Right ventricle myocardium inferior (tissue), 1 donor: ENCODE measurements at regions of chr1 and their contacts with region 1.

Region 1: DNA sequence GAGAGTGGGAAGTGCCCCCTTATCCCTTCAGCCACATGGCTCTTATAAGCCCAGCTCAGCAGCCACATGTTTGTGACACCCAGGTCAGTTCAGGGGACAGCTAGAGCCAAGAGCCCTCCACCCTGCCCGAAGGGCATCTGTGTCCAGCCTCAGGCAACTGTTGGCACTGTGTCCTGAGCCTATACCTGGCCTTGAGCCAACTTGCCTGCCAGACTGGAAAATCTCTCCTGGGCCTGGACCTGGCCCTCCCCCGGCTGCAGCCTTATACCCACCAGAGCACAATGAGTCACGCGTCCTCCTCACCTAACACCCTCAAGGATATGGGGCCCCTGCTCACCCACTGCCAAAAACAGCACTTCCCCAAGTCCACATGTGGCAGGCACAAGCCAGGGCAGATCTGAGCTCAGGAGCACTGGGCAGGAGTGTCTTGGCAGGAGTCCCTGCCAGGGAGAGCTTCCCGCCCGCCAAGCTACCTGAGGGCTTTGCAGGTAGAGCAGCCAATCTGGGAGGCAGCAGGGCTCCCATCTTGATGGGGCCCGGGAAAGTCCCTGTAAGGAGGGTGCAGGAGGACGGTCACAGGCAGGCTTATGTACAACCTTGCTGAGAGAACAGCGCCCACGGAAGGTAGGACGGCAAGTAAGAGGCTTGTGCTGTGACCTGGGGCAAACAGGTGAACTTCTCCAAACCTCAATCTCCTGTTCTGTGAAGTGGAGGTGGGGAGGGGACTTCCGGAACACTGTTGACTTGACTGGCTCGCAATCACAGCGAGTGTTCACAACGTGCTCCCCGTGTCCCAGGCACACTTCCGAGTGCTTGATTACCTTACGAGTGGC is 19.8 kb upstream of the HSPG2 start:
- DNase-seq: peak; percentile 74
- ATAC-seq: peak; percentile 77

Region 2: DNA sequence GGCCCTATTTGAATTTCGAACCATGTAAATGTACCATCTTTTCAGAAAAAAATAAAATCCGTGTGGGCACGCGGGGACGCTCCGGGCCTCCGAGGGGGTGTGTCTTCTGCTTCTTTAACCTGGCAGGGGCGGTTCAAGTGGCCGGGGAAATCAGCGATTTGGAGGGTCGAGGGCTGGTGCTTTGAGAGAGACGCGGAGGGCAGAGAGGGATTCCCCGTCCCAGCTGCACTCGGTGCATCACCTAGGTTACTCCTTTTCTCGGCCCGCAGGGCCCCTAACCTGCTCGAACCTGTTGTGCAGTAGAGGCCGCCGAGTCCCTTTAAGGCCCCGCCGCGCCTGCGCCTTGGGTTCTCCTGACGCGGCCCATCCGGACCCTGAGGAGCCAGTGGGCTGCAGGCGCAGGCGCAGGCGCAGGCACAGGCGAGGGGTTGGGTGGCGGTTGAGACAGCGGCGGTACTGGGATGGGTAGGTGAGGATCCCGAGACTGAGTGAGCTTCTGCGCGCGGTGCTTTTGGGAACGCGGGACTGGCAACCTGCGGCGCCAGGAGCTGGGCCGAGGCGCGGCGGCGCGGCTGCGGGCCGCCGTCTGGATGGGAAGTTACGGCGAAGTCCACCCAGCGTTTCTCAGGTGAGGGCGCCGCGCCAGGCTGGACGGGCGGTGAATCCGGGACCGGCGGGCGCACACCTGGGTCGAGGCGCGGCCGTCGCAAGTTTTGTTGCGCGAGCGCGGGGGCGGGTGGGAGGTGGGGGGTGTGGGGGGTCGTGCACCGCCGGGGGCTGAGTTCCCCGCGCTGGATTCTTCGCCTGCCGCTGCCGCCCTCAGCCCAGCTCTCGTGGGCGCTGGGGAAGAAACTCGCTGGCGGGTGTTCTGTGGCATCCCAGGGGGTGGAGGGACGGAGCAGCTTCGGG is 517.0 kb before region 1 on chr1 and contains the start of gene NBPF3:
- intact Hi-C with region 1: no loop called
- DNase-seq: peak; percentile 93
- ATAC-seq: peak; percentile 98
- total RNA-seq, gene NBPF3: 4.6 TPM

Region 3: GRCh38 chr1:21896652-21897532 is 60.0 kb before region 1 on chr1:
- intact Hi-C with region 1: loop called (anchors 5 kb)
- DNase-seq: peak; percentile 88
- ATAC-seq: peak; percentile 89

Region 4: GRCh38 chr1:21909787-21910503 is 47.0 kb before region 1 on chr1:
- intact Hi-C with region 1: loop called (anchors 2 kb)
- DNase-seq: peak; percentile 78
- ATAC-seq: peak; percentile 45

Region 5: GRCh38 chr1:21939650-21940374 is 17.1 kb before region 1 on chr1:
- intact Hi-C with region 1: loop called (anchors 2 kb)
- DNase-seq: peak; percentile 86
- ATAC-seq: peak; percentile 36

Region 6: DNA sequence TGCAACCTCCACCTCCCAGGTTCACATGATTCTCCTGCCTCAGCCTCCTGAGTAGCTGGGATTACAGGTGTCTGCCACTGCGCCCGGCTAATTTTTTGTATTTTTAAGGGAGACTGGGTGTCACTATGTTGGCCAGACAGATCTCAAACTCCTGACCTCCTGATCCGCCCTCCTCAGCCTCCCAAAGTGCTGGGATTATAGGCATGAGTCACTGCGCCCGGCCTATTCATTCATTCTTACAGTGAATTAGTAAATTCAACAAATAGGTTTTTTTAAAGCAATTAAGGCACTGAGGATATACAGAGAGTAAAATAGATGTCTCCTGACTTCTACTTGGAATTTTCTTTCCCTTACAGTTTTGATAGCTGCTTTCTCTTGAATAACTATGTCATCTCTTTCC is 139.1 kb after region 1 on chr1:
- intact Hi-C with region 1: no loop called
- DNase-seq: no peak
- ATAC-seq: no peak